Endothelial cell of umbilical vein (primary cell): ENCODE measurements at regions of chr17 and their contacts with region 1.

Region 1: DNA sequence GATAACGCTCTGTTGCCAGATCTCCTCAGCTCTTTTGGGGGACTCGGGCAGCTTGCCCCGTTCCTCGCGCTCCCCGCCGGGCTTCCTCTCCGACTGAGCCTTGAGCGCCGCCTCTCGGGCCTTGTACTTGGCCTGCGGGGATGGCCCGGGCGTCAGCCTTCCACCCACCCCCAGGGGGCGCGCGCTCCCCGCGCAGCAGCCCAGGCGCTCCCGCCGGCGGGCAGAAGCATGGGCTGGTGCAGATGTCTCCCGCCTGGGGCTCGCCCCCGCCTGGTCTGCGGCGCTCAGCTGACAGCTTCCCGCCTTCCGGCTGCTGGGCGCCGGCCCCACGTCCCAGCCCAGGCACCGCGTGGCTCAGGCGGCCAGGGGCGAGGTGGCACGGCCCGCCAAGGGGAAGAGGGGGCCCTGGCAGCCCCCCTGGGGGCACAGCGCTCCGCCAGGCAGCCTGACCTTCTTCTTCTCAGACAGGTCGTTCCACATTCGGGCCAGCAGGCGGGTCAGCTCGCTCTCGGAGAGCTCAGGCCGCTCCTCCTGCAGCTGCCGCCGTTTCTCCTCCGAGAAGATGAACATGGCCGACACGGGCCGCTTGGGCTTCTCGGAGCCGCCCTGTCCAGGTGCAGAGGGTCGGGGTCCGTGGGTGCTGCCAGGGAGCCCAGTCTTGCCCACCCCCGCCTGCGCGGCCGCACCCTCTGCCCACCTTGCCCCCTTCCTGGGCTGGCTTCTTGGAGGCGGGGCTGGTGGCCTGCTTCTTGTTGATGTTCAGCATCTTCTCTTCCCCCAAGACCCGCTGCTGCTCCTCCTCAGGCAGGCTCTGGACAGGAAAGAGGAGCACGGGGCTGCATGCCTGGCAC is 8.9 kb downstream of the UBTF start:
- DNase-seq: peak; percentile 89
- H3K4me3 ChIP-seq: no peak overlapping the region
- H3K27ac ChIP-seq: no peak overlapping the region
- H3K4me1 ChIP-seq: peaks cover 5% of the 10 kb centered on the region
- H3K27me3 ChIP-seq: no peaks in the 10 kb centered on the region
- CTCF ChIP-seq: peak; percentile 99
- POLR2A ChIP-seq: no peak

Region 2: GRCh38 chr17:44110823-44111633 is 99.5 kb before region 1 on chr17:
- CTCF ChIA-PET with region 1: no interaction called
- POLR2A ChIA-PET with region 1: no interaction called
- dilution Hi-C with region 1: no loop called
- intact Hi-C with region 1: no loop called
- DNase-seq: peak; percentile 87
- H3K4me3 ChIP-seq: peak overlapping the region in 2 of 3 experiments; percentile 10 to 40
- H3K27ac ChIP-seq: no peak overlapping the region
- H3K4me1 ChIP-seq: peaks cover 14% of the 10 kb centered on the region
- H3K27me3 ChIP-seq: no peaks in the 10 kb centered on the region
- CTCF ChIP-seq: no peak
- POLR2A ChIP-seq: no peak

Region 3: GRCh38 chr17:44199553-44200477 is 10.8 kb before region 1 on chr17 and contains the start of gene ATXN7L3:
- CTCF ChIA-PET with region 1: interaction called, 9 read pairs
- POLR2A ChIA-PET with region 1: no interaction called
- dilution Hi-C with region 1: no loop called
- intact Hi-C with region 1: loop called (anchors 1 kb)
- DNase-seq: peak; percentile 98
- H3K4me3 ChIP-seq: peak within 1 kb of the TSS; percentile 70 to 94 (median 88)
- H3K27ac ChIP-seq: peak within 1 kb of the TSS; percentile 69
- H3K4me1 ChIP-seq: peaks cover 26% of the 10 kb centered on the region
- H3K27me3 ChIP-seq: no peaks in the 10 kb centered on the region
- CTCF ChIP-seq: no peak
- POLR2A ChIP-seq: peak; percentile 50
- total RNA-seq, gene ATXN7L3: 82.5 and 102 TPM in 2 replicates

Region 4: DNA sequence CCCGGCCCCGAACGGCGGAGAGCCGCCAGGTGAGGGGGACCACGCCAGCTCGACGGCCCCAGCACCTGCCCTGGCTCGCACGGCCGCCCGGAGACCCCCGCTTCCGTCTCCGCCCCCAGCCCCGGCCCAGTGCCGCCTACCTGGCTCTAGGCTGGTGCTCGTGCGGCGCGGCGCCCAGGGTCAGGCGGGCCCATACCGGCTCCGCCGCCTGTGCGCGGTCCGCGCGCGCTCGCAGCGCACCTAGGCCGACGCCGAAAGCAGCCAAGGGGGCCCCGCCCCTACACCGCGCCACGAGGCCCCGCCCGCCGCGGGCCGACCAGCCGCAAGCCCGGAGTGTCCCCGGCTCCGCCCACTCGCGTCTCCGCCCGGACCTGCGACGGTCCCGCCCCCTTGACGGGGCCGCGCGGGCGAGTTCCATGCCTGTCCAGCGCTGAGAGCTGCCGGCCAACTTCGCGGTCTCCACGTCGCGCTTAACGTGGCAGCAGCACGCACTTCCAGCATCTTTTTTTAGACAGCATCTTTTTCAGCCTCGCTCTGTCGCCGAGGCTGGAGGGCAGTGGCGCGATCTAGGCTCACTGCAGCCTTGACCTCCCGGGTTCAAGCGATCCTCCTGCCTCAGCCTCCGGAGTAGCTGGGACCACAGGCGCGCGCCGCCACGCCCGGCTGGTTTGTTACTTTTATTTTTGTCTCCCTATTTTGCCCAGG is 114.2 kb after region 1 on chr17 and contains the start of gene SLC25A39:
- CTCF ChIA-PET with region 1: interaction called, 58 read pairs
- POLR2A ChIA-PET with region 1: interaction called, 3 read pairs
- dilution Hi-C with region 1: no loop called
- intact Hi-C with region 1: loop called (anchors 1 kb)
- DNase-seq: peak; percentile 92
- H3K4me3 ChIP-seq: peak within 1 kb of the TSS; percentile 34 to 79 (median 52)
- H3K27ac ChIP-seq: peak within 1 kb of the TSS; percentile 61
- H3K4me1 ChIP-seq: peaks cover 9% of the 10 kb centered on the region
- H3K27me3 ChIP-seq: no peaks in the 10 kb centered on the region
- CTCF ChIP-seq: no peak
- POLR2A ChIP-seq: peak; percentile 84
- total RNA-seq, gene SLC25A39: 88.5 and 97.9 TPM in 2 replicates

Region 5: GRCh38 chr17:44344939-44345453 is 134.4 kb after region 1 on chr17 and contains the start of gene GRN:
- CTCF ChIA-PET with region 1: interaction called, 37 read pairs
- POLR2A ChIA-PET with region 1: no interaction called
- dilution Hi-C with region 1: no loop called
- intact Hi-C with region 1: loop called (anchors 1 kb)
- DNase-seq: peak; percentile 99
- H3K4me3 ChIP-seq: peak within 1 kb of the TSS; percentile 31 to 70 (median 62)
- H3K27ac ChIP-seq: peak within 1 kb of the TSS; percentile 4
- H3K4me1 ChIP-seq: no peaks in the 10 kb centered on the region
- H3K27me3 ChIP-seq: peaks cover 0 to 2% of the 10 kb centered on the region in 2 experiments
- CTCF ChIP-seq: no peak
- POLR2A ChIP-seq: peak; percentile 96
- total RNA-seq, gene GRN: 343 and 346 TPM in 2 replicates

Region 6: GRCh38 chr17:44363613-44364159 is 153.1 kb after region 1 on chr17 and contains the start of gene FAM171A2:
- CTCF ChIA-PET with region 1: interaction called, 11 read pairs
- POLR2A ChIA-PET with region 1: no interaction called
- dilution Hi-C with region 1: no loop called
- intact Hi-C with region 1: no loop called
- DNase-seq: peak; percentile 56
- H3K4me3 ChIP-seq: peak within 1 kb of the TSS; percentile 33 to 85 (median 37)
- H3K27ac ChIP-seq: no peak within 1 kb of the TSS
- H3K4me1 ChIP-seq: peaks cover 5% of the 10 kb centered on the region
- H3K27me3 ChIP-seq: peaks cover 6 to 8% of the 10 kb centered on the region in 2 experiments
- CTCF ChIP-seq: peak; percentile 53 to 60
- POLR2A ChIP-seq: peak; percentile 64
- total RNA-seq, gene FAM171A2: 12.0 and 13.4 TPM in 2 replicates